Activated CD8-positive, alpha-beta memory T cell treated with anti-CD3 and anti-CD28 coated beads, Interleukin-2, amount 10 ng/mL, durations not matched to agents 7 days and 5 days (primary cell): ENCODE measurements at regions of chr10 and their contacts with region 1.

Region 1: GRCh38 chr10:102476466-102477141 is 25.3 kb upstream of the C10orf95 start:
- DNase-seq: no peak
- ATAC-seq: no peak
- H3K4me3 Mint-ChIP-seq: no peak overlapping the region
- H3K27ac Mint-ChIP-seq: peak overlapping the region; percentile 52
- H3K4me1 Mint-ChIP-seq: peaks cover 12% of the 10 kb centered on the region
- H3K27me3 Mint-ChIP-seq: no peaks in the 10 kb centered on the region

Region 2: DNA sequence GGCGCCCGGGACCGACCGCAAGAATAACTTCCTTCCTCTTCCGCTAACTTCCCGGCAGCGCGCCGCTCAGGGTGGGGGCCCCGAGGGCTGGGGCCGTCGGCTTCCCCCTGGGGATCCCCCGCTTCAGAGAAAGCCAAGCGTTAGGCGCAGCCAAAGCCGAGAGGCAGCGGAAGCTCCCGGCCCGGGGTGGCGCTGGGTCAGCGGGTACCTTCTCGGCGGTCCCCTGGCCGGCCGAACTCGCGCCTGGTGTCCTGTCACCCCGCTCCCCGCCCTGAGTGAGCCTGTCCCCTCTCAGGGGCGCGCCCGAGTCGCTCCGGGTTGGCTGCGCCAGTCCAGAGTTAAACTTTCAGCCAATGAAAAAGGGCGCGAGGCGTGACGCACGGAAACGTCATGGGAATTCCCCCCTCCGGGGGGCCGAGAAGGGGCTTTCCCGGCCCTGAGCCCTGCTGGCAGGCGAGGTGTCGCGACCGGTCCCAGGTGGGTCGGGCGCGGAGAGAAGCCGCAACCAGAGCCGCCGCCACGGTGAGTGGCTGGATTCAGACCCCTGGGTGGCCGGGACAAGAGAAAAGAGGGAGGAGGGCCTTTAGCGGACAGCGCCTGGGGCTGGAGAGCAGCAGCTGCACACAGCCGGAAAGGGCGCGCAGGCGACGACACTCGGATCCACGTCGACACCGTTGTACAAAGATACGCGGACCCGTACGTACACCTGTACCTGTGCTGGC is 82.4 kb before region 1 on chr10:
- CTCF ChIA-PET with region 1: interaction called, 32 read pairs
- DNase-seq: peak; percentile 99
- ATAC-seq: peak; percentile 88
- H3K4me3 Mint-ChIP-seq: peak overlapping the region; percentile 84
- H3K27ac Mint-ChIP-seq: peak overlapping the region; percentile 90
- H3K4me1 Mint-ChIP-seq: peaks cover 38% of the 10 kb centered on the region
- H3K27me3 Mint-ChIP-seq: no peaks in the 10 kb centered on the region

Region 3: DNA sequence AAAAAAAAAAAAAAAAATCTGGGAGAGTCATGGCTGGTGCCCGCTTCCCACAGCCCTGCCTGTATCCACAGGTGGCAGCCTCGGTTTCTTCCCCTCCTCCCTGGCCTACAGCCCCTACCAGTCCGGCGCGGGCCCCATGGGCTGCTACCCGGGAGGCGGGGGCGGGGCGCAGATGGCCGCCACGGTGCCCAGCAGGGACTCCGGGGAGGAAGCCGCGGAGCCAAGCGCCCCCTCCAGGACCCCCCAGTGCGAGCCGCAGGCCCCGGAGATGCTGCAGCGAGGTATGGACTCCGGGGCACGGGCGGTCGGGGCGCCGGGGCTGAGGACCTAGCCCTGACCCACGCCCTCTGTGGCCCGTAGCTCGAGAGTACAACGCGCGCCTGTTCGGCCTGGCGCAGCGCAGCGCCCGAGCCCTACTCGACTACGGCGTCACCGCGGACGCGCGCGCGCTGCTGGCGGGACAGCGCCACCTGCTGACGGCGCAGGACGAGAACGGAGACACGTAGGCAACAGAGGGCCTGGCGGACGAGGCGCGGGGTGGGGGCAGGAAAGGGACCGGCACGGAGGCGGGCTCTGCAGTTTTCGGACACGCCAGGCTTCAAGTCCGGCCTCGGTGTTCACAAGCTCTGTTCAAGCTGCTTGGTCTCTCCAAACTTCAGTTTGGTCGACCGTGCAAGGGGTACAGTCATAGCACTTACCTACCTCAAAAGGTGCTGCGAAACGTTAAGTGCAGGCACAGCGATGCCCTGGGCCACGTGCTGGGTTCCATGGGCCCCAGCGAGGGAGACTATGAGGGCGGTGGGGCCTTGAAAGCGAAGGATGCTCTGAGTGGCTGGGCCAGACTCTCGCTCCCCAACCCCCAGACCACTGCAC is 77.2 kb before region 1 on chr10:
- CTCF ChIA-PET with region 1: interaction called, 32 read pairs
- DNase-seq: peak; percentile 92
- ATAC-seq: peak; percentile 66
- H3K4me3 Mint-ChIP-seq: peak overlapping the region; percentile 52
- H3K27ac Mint-ChIP-seq: peak overlapping the region; percentile 59
- H3K4me1 Mint-ChIP-seq: peaks cover 36% of the 10 kb centered on the region
- H3K27me3 Mint-ChIP-seq: no peaks in the 10 kb centered on the region

Region 4: DNA sequence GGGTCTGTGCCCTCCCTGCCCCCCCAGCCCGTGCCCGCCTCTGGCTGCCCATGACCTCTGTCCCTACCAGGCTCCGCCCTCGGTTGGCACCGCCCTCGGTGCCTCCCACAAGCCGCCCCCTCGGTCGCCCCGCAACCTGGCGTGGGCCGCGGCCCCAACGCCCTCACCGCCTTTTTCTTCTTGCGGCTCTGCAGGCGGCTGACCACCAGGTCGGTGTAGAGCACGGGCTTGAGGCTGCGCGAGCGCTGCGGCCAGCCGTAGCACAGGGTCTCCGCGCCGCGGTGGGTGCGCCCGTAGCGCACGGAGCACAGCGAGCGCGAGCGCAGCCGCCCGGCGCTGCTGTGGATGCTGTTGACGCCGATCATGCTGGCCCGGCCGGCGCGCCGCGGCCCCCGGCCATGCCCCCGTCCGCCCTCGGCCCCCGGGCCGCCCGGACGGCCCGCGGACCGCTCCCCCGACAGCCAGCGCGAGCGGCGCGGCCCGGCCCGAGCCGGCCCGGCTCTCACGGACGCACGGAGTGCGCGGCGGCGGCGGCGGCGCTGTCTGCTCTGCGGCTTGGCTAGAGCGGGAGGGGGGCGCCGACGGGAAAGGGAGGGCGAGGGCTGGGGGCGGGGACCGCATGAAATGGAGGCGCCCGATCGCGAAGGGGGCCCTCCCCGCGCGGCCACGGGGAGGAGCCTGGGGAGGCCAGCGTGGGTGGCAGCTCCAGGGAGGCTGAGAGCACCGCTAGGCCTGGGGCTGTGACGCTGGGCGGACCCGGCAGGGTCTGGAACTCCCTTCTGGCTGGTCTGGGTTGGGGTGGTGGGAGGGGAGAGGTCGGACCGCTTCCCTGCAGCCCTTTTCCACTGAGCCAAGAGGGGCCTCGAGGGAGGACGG is 67.6 kb before region 1 on chr10:
- CTCF ChIA-PET with region 1: interaction called, 11 read pairs
- DNase-seq: peak; percentile 65
- ATAC-seq: peak; percentile 57
- H3K4me3 Mint-ChIP-seq: peak overlapping the region; percentile 42
- H3K27ac Mint-ChIP-seq: no peak overlapping the region
- H3K4me1 Mint-ChIP-seq: peaks cover 29% of the 10 kb centered on the region
- H3K27me3 Mint-ChIP-seq: peaks cover 42% of the 10 kb centered on the region

Region 5: DNA sequence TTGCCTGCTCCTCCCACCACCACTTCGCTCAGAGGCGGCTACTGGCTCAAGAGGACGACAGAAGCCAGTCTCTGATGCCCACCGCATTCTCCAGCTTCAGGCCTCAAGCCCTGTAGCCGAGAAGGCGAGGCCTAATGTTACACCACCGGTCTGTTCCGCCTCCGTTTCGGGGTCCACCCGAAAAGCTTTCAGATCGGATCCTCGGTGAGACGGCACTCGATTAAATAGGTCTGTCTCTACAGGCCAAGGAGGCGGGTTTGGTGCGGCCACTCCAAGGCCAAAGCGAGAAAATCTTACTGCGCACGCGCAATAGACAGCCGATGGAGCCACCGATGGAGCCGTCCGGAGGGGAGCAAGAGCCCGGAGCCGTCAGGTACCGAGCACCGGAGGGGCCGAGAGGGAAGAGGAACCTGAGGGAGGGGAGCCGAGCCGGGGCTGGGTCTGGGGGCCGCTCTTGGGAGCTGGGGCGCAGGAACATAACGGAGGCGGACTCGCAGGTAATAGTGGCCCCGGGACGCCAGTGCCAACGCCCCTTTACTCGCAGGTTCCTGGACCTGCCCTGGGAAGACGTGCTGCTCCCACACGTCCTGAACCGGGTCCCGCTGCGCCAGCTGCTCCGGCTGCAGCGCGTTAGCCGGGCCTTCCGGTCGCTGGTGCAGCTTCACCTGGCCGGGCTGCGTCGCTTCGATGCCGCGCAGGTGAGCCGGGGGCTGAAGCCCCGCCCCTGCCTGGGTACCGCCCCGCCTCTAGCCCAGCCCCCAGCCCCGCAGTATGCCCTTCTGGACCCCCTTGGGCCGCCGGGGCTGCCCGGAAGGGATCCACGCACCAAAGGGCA is 55.6 kb before region 1 on chr10 and contains the start of gene FBXL15:
- CTCF ChIA-PET with region 1: interaction called, 20 read pairs
- DNase-seq: peak; percentile 98
- ATAC-seq: peak; percentile 87
- H3K4me3 Mint-ChIP-seq: peak within 1 kb of the TSS; percentile 97
- H3K27ac Mint-ChIP-seq: peak within 1 kb of the TSS; percentile 95
- H3K4me1 Mint-ChIP-seq: peaks cover 40% of the 10 kb centered on the region
- H3K27me3 Mint-ChIP-seq: peaks cover 19% of the 10 kb centered on the region
- total RNA-seq, gene FBXL15: 13.5 to 15.2 TPM

Region 6: GRCh38 chr10:102450194-102450938 is 26.2 kb before region 1 on chr10:
- CTCF ChIA-PET with region 1: interaction called, 12 read pairs
- DNase-seq: peak; percentile 92
- ATAC-seq: peak; percentile 79
- H3K4me3 Mint-ChIP-seq: peak overlapping the region; percentile 86
- H3K27ac Mint-ChIP-seq: peak overlapping the region; percentile 91
- H3K4me1 Mint-ChIP-seq: peaks cover 42% of the 10 kb centered on the region
- H3K27me3 Mint-ChIP-seq: no peaks in the 10 kb centered on the region

Region 7: GRCh38 chr10:102461187-102462054 is 15.2 kb before region 1 on chr10:
- CTCF ChIA-PET with region 1: interaction called, 11 read pairs
- DNase-seq: peak; percentile 94
- ATAC-seq: peak; percentile 99
- H3K4me3 Mint-ChIP-seq: peak overlapping the region; percentile 82
- H3K27ac Mint-ChIP-seq: peak overlapping the region; percentile 79
- H3K4me1 Mint-ChIP-seq: peaks cover 29% of the 10 kb centered on the region
- H3K27me3 Mint-ChIP-seq: no peaks in the 10 kb centered on the region